Caco-2 (cell line): ENCODE measurements at regions of chr3 and their contacts with region 1.

Region 1: GRCh38 chr3:121545574-121546455 is at the start of gene POLQ:
- DNase-seq: peak; percentile 88 to 89
- H3K4me3 ChIP-seq: peak within 1 kb of the TSS; percentile 72
- H3K4me3 Mint-ChIP-seq: peak within 1 kb of the TSS; percentile 90
- H3K27ac Mint-ChIP-seq: peak within 1 kb of the TSS; percentile 92
- H3K4me1 ChIP-seq: peaks cover 5% of the 10 kb centered on the region
- H3K4me1 Mint-ChIP-seq: no peaks in the 10 kb centered on the region
- H3K27me3 ChIP-seq: no peaks in the 10 kb centered on the region
- H3K27me3 Mint-ChIP-seq: no peaks in the 10 kb centered on the region
- CTCF ChIP-seq: no peak
- total RNA-seq, gene POLQ: 15.4 and 17.2 TPM in 2 replicates

Region 2: GRCh38 chr3:121508389-121508788 is 37.4 kb before region 1 on chr3:
- CTCF ChIA-PET with region 1: no interaction called
- POLR2A ChIA-PET with region 1: no interaction called
- intact Hi-C with region 1: no loop called
- DNase-seq: peak; percentile 57 to 66
- H3K4me3 ChIP-seq: no peak overlapping the region
- H3K4me3 Mint-ChIP-seq: peak overlapping the region; percentile 28
- H3K27ac Mint-ChIP-seq: peak overlapping the region; percentile 77
- H3K4me1 ChIP-seq: peaks cover 40% of the 10 kb centered on the region
- H3K4me1 Mint-ChIP-seq: peaks cover 24% of the 10 kb centered on the region
- H3K27me3 ChIP-seq: no peaks in the 10 kb centered on the region
- H3K27me3 Mint-ChIP-seq: no peaks in the 10 kb centered on the region
- CTCF ChIP-seq: no peak

Region 3: GRCh38 chr3:121520510-121520909 is 25.3 kb before region 1 on chr3:
- CTCF ChIA-PET with region 1: no interaction called
- POLR2A ChIA-PET with region 1: no interaction called
- intact Hi-C with region 1: no loop called
- DNase-seq: no peak
- H3K4me3 ChIP-seq: no peak overlapping the region
- H3K4me3 Mint-ChIP-seq: no peak overlapping the region
- H3K27ac Mint-ChIP-seq: no peak overlapping the region
- H3K4me1 ChIP-seq: no peaks in the 10 kb centered on the region
- H3K4me1 Mint-ChIP-seq: no peaks in the 10 kb centered on the region
- H3K27me3 ChIP-seq: no peaks in the 10 kb centered on the region
- H3K27me3 Mint-ChIP-seq: no peaks in the 10 kb centered on the region
- CTCF ChIP-seq: no peak

Region 4: GRCh38 chr3:121749276-121750086 is 203.7 kb after region 1 on chr3 and contains the start of gene GOLGB1:
- CTCF ChIA-PET with region 1: no interaction called
- POLR2A ChIA-PET with region 1: no interaction called
- intact Hi-C with region 1: loop called (anchors 1 kb)
- DNase-seq: peak; percentile 95 to 97
- H3K4me3 ChIP-seq: peak within 1 kb of the TSS; percentile 86
- H3K4me3 Mint-ChIP-seq: no peak within 1 kb of the TSS
- H3K27ac Mint-ChIP-seq: no peak within 1 kb of the TSS
- H3K4me1 ChIP-seq: 0 out of 2 replicates have a peak, but pooled peaks cover 8% of the 10 kb centered on the region
- H3K4me1 Mint-ChIP-seq: peaks cover 14% of the 10 kb centered on the region
- H3K27me3 ChIP-seq: no peaks in the 10 kb centered on the region
- H3K27me3 Mint-ChIP-seq: no peaks in the 10 kb centered on the region
- CTCF ChIP-seq: no peak
- total RNA-seq, gene GOLGB1: 31.5 and 34.3 TPM in 2 replicates

Region 5: DNA sequence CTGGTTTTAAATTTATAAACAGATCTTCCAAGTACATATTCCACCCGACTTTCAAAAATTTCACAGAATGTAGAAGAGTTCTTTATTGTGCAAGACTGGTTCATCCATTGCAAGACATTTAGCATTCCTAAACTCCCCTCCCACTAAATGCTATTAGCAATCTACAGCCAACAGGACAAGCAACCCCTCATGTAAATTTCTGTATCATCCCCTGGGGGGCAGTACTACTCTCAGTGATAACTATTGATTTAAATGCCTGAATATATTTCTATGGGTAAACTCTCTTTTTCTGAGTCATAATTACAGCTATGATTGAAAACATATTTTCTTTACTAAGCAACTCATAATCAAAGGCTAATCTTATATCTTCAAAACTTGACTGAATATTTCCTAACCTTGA is 337.7 kb after region 1 on chr3:
- CTCF ChIA-PET with region 1: no interaction called
- POLR2A ChIA-PET with region 1: no interaction called
- intact Hi-C with region 1: loop called (anchors 2 kb)
- DNase-seq: peak in 1 of 2 experiments; percentile 51
- H3K4me3 ChIP-seq: no peak overlapping the region
- H3K4me3 Mint-ChIP-seq: no peak overlapping the region
- H3K27ac Mint-ChIP-seq: no peak overlapping the region
- H3K4me1 ChIP-seq: peaks cover 11% of the 10 kb centered on the region
- H3K4me1 Mint-ChIP-seq: peaks cover 19% of the 10 kb centered on the region
- H3K27me3 ChIP-seq: no peaks in the 10 kb centered on the region
- H3K27me3 Mint-ChIP-seq: no peaks in the 10 kb centered on the region
- CTCF ChIP-seq: peak in 1 of 2 experiments; percentile 55

Region 6: GRCh38 chr3:121995161-121996137 is 449.6 kb after region 1 on chr3:
- CTCF ChIA-PET with region 1: interaction called, 11 read pairs
- POLR2A ChIA-PET with region 1: no interaction called
- intact Hi-C with region 1: loop called (anchors 1 kb)
- DNase-seq: peak; percentile 72 to 76
- H3K4me3 ChIP-seq: no peak overlapping the region
- H3K4me3 Mint-ChIP-seq: no peak overlapping the region
- H3K27ac Mint-ChIP-seq: no peak overlapping the region
- H3K4me1 ChIP-seq: peaks cover 32% of the 10 kb centered on the region
- H3K4me1 Mint-ChIP-seq: peaks cover 24% of the 10 kb centered on the region
- H3K27me3 ChIP-seq: no peaks in the 10 kb centered on the region
- H3K27me3 Mint-ChIP-seq: no peaks in the 10 kb centered on the region
- CTCF ChIP-seq: peak; percentile 49 to 72

Region 7: GRCh38 chr3:122258757-122259371 is 713.0 kb after region 1 on chr3:
- CTCF ChIA-PET with region 1: interaction called, 9 read pairs
- POLR2A ChIA-PET with region 1: no interaction called
- intact Hi-C with region 1: loop called (anchors 1 kb)
- DNase-seq: peak; percentile 68 to 69
- H3K4me3 ChIP-seq: no peak overlapping the region
- H3K4me3 Mint-ChIP-seq: no peak overlapping the region
- H3K27ac Mint-ChIP-seq: no peak overlapping the region
- H3K4me1 ChIP-seq: no peaks in the 10 kb centered on the region
- H3K4me1 Mint-ChIP-seq: no peaks in the 10 kb centered on the region
- H3K27me3 ChIP-seq: peaks cover 1% of the 10 kb centered on the region; the same call in 1 of the 2 replicates
- H3K27me3 Mint-ChIP-seq: peaks cover 15% of the 10 kb centered on the region
- CTCF ChIP-seq: peak; percentile 47 to 76

Region 8: GRCh38 chr3:122356415-122356814 is 810.6 kb after region 1 on chr3:
- CTCF ChIA-PET with region 1: interaction called, 3 read pairs
- POLR2A ChIA-PET with region 1: no interaction called
- intact Hi-C with region 1: loop called (anchors 1 kb)
- DNase-seq: peak; percentile 50 to 56
- H3K4me3 ChIP-seq: no peak overlapping the region
- H3K4me3 Mint-ChIP-seq: no peak overlapping the region
- H3K27ac Mint-ChIP-seq: no peak overlapping the region
- H3K4me1 ChIP-seq: 0 out of 2 replicates have a peak, but pooled peaks cover under 1% of the 10 kb centered on the region
- H3K4me1 Mint-ChIP-seq: no peaks in the 10 kb centered on the region
- H3K27me3 ChIP-seq: no peaks in the 10 kb centered on the region
- H3K27me3 Mint-ChIP-seq: no peaks in the 10 kb centered on the region
- CTCF ChIP-seq: peak; percentile 31 to 52